ENCODE measurements at regions of chr5 and their contacts with region 1.

Region 1: DNA sequence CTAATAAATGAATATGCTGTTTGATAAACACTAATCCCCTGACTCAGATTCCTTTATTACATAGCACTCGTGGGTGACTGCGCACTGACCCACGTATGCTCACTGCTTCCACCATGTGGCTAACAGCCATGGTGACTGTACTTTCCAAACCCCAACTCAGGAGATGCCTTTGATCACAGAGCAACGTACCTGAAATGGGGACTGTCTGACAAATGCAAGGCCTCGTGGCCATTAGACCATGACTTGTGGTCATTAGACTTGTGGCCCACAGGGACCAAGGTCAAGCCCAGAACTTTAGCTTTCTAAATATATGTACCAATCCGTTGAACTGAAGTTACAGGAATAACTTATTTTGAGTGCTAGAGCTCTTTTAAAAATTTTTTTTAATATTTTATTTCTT is 46.6 kb downstream of the CYFIP2 start:
- DNase-seq: peak; percentile 84
- CTCF ChIP-seq: peak; percentile 71

Region 2: GRCh38 chr5:156595132-156595787 is 717.2 kb before region 1 on chr5:
- in situ Hi-C with region 1: no loop called
- DNase-seq: no peak
- CTCF ChIP-seq: no peak

Region 3: GRCh38 chr5:157172403-157172802 is 140.1 kb before region 1 on chr5:
- in situ Hi-C with region 1: loop called (anchors 25 kb)
- DNase-seq: peak; percentile 80
- CTCF ChIP-seq: no peak

Region 4: DNA sequence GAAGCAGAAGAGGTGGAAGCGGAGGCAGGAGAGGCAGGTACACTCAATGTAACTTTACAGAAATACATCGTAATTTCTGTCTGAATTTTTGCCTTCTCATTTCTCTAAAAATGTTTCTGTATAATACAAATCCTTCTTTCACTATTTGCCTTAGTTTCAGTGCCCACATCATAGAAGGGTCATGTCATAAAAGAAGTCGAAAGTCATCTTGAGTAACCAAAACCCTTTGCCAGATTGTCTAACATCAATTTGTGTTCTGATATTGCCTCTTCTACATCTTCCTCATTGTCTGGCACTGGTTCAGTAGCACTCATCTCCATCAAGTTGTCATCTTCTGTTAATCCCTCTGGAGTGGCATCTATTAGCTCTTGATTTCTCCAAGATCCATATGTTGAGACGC is 52.8 kb before region 1 on chr5:
- in situ Hi-C with region 1: loop called (anchors 5 kb)
- DNase-seq: no peak
- CTCF ChIP-seq: no peak

Measured in GM13976 (cell line).